A673 (cell line): ENCODE measurements at regions of chr10 and their contacts with region 1.

Region 1: GRCh38 chr10:102247734-102248133 is 2.4 kb downstream of the GBF1 start:
- DNase-seq: no peak
- H3K4me3 ChIP-seq: no peak overlapping the region
- H3K27ac ChIP-seq: no peak overlapping the region
- H3K4me1 ChIP-seq: peaks cover 20% of the 10 kb centered on the region
- H3K27me3 ChIP-seq: no peaks in the 10 kb centered on the region
- CTCF ChIP-seq: no peak

Region 2: DNA sequence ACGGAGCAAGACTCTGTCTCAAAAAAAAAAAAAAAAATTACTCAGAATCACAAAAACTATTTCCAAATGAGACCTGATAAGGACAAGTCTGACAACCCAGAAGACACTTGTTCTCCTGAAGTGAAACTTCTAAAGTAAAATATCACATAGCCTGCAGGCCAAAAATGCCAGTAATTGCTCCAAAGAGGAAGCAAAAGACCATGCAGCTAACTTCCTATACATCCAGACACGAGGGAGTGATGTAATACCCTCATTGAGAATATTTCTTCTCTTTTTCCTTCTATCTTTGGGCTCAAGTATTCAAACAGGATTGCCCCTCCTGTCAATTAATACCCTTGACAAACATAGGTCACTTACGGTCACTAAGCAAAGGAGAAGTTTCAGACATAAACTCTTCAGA is 222.9 kb before region 1 on chr10:
- CTCF ChIA-PET with region 1: no interaction called
- POLR2A ChIA-PET with region 1: no interaction called
- intact Hi-C with region 1: no loop called
- DNase-seq: no peak
- H3K4me3 ChIP-seq: no peak overlapping the region
- H3K27ac ChIP-seq: no peak overlapping the region
- H3K4me1 ChIP-seq: no peaks in the 10 kb centered on the region
- H3K27me3 ChIP-seq: no peaks in the 10 kb centered on the region
- CTCF ChIP-seq: no peak

Region 3: DNA sequence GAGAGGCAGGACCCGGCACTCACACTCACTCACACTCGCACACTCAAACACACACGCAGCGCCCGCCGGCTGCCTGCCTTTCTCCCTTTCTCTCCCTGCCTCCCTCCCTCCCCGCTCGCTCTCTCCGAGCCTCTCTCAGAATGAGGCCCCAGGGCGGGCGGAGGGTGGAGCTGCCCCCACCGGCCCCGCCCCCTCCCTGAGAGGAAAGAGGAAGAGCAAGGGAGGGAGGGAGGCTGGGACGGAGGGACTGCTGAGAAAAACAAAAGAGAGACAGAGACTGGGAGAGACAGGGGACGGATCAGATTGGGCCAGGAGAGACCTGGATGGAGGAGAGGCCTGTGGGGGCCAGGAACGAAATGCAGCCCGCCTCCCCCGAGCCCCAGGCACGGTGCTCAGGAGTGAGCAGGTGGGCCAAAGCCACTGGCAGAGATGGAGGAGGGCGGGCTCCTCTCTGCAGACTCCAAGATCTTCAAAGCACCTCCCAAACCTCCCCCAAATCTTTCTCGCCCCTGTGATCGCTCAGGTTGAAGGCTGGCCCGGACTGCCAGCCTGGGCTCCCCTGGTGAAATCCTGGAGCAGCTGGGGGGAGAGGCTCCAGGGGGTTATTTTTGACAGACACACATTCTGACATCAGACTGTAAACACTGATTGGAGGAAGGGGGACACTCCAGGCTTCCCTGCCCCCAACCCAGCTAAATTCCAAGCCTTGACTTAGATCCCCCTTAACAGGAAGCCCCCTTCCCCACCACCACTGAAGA is 132.7 kb before region 1 on chr10:
- CTCF ChIA-PET with region 1: no interaction called
- POLR2A ChIA-PET with region 1: interaction called, 11 read pairs
- intact Hi-C with region 1: no loop called
- DNase-seq: peak; percentile 97
- H3K4me3 ChIP-seq: peak overlapping the region; percentile 96
- H3K27ac ChIP-seq: peak overlapping the region; percentile 81
- H3K4me1 ChIP-seq: peaks cover 58% of the 10 kb centered on the region
- H3K27me3 ChIP-seq: no peaks in the 10 kb centered on the region
- CTCF ChIP-seq: no peak